Common myeloid progenitor, CD34-positive (primary cell): ENCODE measurements at regions of chr20 and their contacts with region 1.

Region 1: GRCh38 chr20:32091888-32092346 is 17.6 kb upstream of the TM9SF4 start:
- DNase-seq: peak; percentile 77 to 89 (median 85)
- H3K4me3 ChIP-seq: no peak overlapping the region
- H3K27ac ChIP-seq: no peak overlapping the region
- H3K4me1 ChIP-seq: no peaks in the 10 kb centered on the region
- H3K27me3 ChIP-seq: no peaks in the 10 kb centered on the region

Region 2: DNA sequence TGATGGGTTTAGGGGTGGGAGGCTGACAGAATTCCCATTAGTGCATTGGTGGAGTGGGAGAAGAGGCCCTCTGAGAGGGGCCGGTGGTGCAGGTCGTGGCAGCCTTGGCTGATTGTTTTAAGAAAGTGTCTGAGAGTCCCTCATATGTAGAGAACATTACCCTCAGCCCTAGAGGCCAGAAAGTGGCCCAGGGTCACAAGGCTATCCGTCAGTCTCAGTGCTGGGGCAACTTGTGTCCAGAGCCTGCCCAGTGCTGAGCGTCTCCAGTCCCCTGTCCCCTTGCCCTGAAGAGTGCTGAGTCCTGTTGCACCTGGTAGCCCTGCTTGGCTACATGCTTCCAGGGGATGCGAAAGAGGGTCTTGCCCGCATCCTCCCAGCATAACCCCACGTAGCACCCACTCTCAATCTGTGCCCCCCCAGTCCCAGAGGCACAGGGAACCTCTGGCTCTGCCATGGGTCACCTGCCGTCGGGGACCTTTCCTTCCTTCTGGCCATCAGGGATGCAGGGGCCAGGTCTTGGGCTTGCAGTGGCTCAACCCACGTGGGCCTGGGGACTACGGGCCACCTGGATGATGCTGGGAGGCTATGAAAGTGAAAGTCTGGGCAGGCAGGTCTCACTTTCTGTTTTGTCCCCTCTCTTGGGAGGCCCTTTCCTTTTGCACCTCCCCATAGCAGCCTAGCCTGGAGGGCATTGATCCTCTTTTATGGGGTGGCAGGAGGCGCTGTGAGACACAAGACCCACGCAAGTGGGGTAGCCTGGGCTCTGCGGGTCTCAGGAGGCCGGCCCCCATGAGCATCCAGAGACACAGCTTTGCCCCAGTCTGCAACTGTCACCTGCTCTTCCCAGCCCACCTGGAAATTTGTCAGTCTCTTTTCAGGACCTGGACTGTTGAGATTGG is 233.8 kb before region 1 on chr20:
- CTCF ChIA-PET with region 1: interaction called, 16 read pairs
- POLR2A ChIA-PET with region 1: no interaction called
- DNase-seq: peak in 2 of 3 donors; percentile 61 to 65
- H3K4me3 ChIP-seq: peak overlapping the region in 1 of 7 experiments; percentile 1
- H3K27ac ChIP-seq: no peak overlapping the region
- H3K4me1 ChIP-seq: peaks cover 0 to 42% (median 20%) of the 10 kb centered on the region in 4 experiments
- H3K27me3 ChIP-seq: peaks cover 0 to 18% (median 3%) of the 10 kb centered on the region in 5 experiments

Region 3: GRCh38 chr20:32040142-32041022 is 51.5 kb before region 1 on chr20:
- CTCF ChIA-PET with region 1: interaction called, 254 read pairs
- POLR2A ChIA-PET with region 1: interaction called, 3 read pairs
- DNase-seq: peak in 2 of 3 donors; percentile 79 to 85
- H3K4me3 ChIP-seq: peak overlapping the region in 3 of 7 experiments; percentile 3 to 39 (median 11)
- H3K27ac ChIP-seq: no peak overlapping the region
- H3K4me1 ChIP-seq: peaks cover 16 to 56% (median 22%) of the 10 kb centered on the region in 4 experiments
- H3K27me3 ChIP-seq: no peaks in the 10 kb centered on the region

Region 4: DNA sequence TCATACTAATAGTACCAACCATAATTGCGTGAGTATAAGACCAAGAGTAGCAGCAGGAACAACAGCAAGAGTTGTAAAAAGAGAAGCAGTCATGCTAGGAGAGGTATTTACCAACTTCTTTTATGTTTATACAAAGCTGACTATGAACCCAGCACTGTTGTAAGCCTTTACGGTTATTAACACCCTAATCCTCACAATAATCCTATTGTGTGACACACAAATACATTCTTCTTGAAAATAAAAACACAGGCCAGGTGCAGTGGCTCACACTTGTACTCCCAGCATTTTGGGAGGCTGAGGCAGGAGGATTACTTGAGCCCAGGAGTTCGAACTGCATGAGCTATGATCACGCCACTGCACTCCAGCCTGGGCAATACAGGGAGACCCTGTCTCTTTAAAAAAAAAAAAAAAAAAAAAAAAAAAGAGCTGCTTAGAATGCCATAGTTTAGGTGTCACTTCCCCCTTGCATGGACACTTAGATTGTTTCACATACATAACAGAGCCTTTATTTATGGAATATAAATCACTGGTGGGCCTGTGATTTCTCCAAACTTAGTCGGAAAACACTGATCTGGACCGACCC is 19.7 kb before region 1 on chr20:
- CTCF ChIA-PET with region 1: interaction called, 10 read pairs
- POLR2A ChIA-PET with region 1: no interaction called
- DNase-seq: no peak
- H3K4me3 ChIP-seq: no peak overlapping the region
- H3K27ac ChIP-seq: no peak overlapping the region
- H3K4me1 ChIP-seq: peaks cover 7 to 37% (median 11%) of the 10 kb centered on the region in 4 experiments
- H3K27me3 ChIP-seq: no peaks in the 10 kb centered on the region

Region 5: DNA sequence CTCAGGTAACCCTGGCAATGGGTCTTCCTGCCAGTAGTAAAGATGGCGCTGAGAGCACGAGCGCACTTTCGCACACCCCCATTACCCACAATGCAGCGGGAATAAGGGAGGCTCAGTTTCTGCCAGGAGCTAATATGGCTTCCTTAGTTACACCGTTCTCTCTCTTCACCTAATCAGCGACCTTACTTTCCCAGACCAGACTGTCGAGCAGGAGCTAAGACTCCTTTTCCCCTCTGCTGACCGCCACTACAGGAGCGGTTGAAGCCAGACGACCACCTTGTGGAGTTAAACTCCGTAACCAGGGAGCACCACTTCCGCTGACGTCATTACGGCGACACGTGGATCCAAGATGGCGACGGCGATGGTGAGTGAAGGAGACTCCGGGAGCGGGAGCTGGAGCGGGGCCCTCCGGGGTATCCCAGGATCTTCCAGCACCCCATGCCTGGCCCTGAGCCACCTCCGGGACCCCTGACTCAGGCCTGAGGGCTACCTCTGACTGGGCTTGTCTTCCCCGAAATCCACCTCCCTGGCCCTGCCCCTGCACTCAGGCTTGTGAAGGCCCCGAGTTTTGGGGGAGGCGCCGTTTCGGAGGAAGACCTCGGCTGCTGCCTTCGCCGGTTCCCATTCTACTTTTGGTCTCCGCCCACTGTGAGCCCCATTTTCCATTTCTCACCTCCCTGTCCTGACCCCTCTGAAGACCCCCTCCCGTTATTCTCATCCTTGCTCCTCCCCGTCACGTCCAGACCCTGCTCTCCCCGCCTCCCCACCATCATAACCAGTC is 17.7 kb after region 1 on chr20 and contains the start of gene TM9SF4:
- CTCF ChIA-PET with region 1: interaction called, 18 read pairs
- POLR2A ChIA-PET with region 1: no interaction called
- DNase-seq: peak; percentile 96
- H3K4me3 ChIP-seq: peak within 1 kb of the TSS; percentile 84 to 100 (median 99)
- H3K27ac ChIP-seq: peak within 1 kb of the TSS; percentile 100
- H3K4me1 ChIP-seq: peaks cover 12 to 34% (median 19%) of the 10 kb centered on the region in 4 experiments
- H3K27me3 ChIP-seq: peaks cover 0 to 4% (median 0%) of the 10 kb centered on the region in 5 experiments

Region 6: GRCh38 chr20:32119734-32120133 is 27.8 kb after region 1 on chr20:
- CTCF ChIA-PET with region 1: no interaction called
- POLR2A ChIA-PET with region 1: no interaction called
- DNase-seq: no peak
- H3K4me3 ChIP-seq: no peak overlapping the region
- H3K27ac ChIP-seq: no peak overlapping the region
- H3K4me1 ChIP-seq: peaks cover 0 to 14% (median 3%) of the 10 kb centered on the region in 4 experiments
- H3K27me3 ChIP-seq: no peaks in the 10 kb centered on the region

Region 7: DNA sequence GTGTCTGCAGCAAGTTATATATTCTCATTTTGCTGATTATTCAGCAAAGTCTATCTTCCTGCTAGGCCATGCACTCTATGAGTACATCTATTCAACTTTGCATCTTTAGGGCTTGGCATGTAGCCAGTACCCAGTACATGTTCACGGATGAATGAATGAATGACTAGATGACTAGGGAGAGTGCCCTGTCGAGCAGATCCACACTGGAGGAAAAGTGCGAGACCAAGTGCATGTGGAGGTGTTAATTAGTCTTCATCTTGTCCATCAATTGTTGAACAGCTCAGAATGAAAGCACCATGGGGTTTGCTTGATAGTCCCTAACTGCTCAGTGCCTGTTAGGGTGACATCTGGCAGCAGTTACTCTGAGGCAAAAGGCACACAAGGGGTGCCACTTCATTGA is 48.0 kb after region 1 on chr20:
- CTCF ChIA-PET with region 1: no interaction called
- POLR2A ChIA-PET with region 1: no interaction called
- DNase-seq: no peak
- H3K4me3 ChIP-seq: no peak overlapping the region
- H3K27ac ChIP-seq: no peak overlapping the region
- H3K4me1 ChIP-seq: no peaks in the 10 kb centered on the region
- H3K27me3 ChIP-seq: no peaks in the 10 kb centered on the region